ENCODE measurements at regions of chr12 and their contacts with region 1.

Region 1: GRCh38 chr12:117587631-117588287 is 226.3 kb upstream of the NOS1 start:
- DNase-seq: peak; percentile 61
- H3K4me3 ChIP-seq: no peak overlapping the region
- H3K27ac ChIP-seq: no peak overlapping the region; a peak in 1 of 4 replicates
- H3K4me1 ChIP-seq: peaks cover 0 to 7% of the 10 kb centered on the region in 2 experiments; a peak in 1 of 4 replicates
- H3K27me3 ChIP-seq: no peaks in the 10 kb centered on the region
- CTCF ChIP-seq: peak; percentile 70
- EP300 ChIP-seq: no peak
- RAD21 ChIP-seq: peak; percentile 75

Region 2: DNA sequence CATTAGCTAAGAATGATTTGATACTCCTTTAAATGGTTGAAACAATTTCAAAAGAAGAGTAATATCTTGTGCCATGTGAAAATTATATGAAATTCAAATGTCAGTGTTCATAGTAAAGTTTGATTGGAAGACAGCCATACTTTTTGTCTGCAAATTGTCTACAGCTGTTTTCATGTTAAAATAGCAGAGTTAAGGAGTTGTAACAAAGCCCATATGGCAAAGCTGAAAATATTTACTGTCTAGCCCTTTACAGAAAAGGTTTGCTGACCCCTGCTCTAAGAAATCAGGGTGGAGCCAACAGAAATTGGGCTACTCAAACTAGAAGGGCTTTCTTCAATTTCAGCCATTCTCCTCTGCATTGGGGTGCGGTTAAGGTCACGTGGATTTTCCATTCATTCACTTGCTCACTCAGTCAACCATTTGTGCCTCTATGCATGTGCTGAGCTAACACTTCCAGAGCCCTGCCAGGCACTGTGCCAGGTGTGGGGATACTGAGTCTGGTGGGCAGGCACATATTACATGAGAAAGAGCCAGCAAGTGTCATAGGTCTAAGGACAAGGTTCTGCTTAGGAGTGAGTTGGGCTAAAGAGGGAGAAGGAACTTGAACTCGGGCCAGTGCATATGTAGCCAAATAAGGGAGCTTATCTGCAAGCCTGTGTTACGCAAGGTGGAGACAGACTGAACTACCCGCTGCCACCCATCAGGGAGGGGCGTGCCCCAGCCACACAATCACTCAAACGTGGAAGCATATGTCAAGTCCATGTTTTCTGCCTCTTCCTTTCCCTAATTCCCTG is 86.5 kb before region 1 on chr12:
- CTCF ChIA-PET with region 1: interaction called, 10 read pairs
- POLR2A ChIA-PET with region 1: no interaction called
- DNase-seq: no peak
- H3K4me3 ChIP-seq: no peak overlapping the region
- H3K27ac ChIP-seq: peak overlapping the region in 1 of 2 experiments; percentile 14; a peak in 1 of 4 replicates
- H3K4me1 ChIP-seq: peaks cover 0 to 25% of the 10 kb centered on the region in 2 experiments; a peak in 1 of 4 replicates
- H3K27me3 ChIP-seq: no peaks in the 10 kb centered on the region
- CTCF ChIP-seq: no peak
- EP300 ChIP-seq: no peak
- RAD21 ChIP-seq: no peak

Region 3: DNA sequence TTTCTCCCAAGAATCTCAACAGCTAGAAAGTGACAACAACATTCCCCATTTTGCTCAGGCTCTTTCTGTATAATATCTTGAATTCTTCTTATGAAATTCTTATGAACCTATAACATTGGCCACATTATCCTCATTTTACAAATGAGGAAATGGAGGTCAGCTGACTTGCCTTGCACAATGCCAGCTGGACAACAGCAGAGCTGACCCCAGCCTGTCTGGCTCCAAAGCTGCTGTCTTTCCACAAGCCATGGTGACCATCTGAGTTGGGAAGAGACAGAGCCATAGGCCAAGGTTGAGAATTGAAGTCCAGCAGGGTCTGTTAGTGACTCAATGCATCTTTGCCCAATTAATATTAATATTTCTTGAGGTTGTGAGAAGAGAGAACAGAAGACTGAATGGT is 293.8 kb after region 1 on chr12:
- CTCF ChIA-PET with region 1: no interaction called
- POLR2A ChIA-PET with region 1: no interaction called
- DNase-seq: no peak
- H3K4me3 ChIP-seq: no peak overlapping the region
- H3K27ac ChIP-seq: no peak overlapping the region
- H3K4me1 ChIP-seq: no peaks in the 10 kb centered on the region
- H3K27me3 ChIP-seq: no peaks in the 10 kb centered on the region
- CTCF ChIP-seq: no peak
- EP300 ChIP-seq: no peak
- RAD21 ChIP-seq: no peak

Measured in SK-N-SH (cell line).